Mammary epithelial cell (primary cell): ENCODE measurements at regions of chr6 and their contacts with region 1.

Region 1: GRCh38 chr6:42171813-42172581 is 1.2 kb upstream of the GUCA1A start:
- DNase-seq: no peak
- H3K4me3 ChIP-seq: no peak overlapping the region
- H3K27ac ChIP-seq: no peak overlapping the region
- H3K4me1 ChIP-seq: no peaks in the 10 kb centered on the region
- H3K27me3 ChIP-seq: no peaks in the 10 kb centered on the region
- CTCF ChIP-seq: no peak

Region 2: DNA sequence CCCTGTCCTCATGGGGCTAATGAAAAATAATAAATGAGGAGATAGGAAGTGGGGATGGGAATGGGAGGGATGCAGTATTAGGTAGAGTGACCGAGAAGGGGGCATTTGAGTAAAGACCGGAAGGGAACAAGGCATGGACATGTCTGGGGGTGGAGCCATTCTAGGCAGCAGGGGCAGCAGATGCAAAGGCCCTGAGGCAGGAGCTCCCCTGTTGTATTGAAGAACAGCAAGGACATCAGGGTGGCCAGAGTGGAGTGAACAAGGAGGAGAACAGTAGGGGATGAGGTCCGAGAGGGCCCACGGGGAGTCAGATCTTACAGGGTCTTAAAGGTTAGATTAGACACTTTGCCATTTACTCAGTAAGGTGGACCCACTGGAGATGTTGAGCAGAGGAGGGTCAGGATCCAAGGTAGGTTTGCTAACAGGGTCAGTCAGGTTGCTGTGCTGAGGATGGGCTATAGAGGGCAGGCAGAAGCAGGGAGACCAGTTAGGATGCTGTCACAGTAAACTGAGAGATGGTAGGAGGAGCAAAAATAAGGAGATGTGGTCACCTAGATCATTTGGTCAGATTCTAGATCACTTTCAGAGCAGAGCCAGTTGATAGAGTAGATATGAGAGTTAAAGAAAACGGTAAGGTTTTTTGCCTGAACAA is 103.0 kb before region 1 on chr6:
- CTCF ChIA-PET with region 1: no interaction called
- dilution Hi-C with region 1: loop called (anchors 5 kb)
- in situ Hi-C with region 1: no loop called
- intact Hi-C with region 1: no loop called
- DNase-seq: no peak
- H3K4me3 ChIP-seq: no peak overlapping the region
- H3K27ac ChIP-seq: no peak overlapping the region
- H3K4me1 ChIP-seq: no peaks in the 10 kb centered on the region
- H3K27me3 ChIP-seq: no peaks in the 10 kb centered on the region
- CTCF ChIP-seq: no peak

Region 3: GRCh38 chr6:42129069-42129676 is 42.8 kb before region 1 on chr6:
- CTCF ChIA-PET with region 1: no interaction called
- dilution Hi-C with region 1: loop called (anchors 5 kb)
- in situ Hi-C with region 1: no loop called
- intact Hi-C with region 1: no loop called
- DNase-seq: no peak
- H3K4me3 ChIP-seq: no peak overlapping the region
- H3K27ac ChIP-seq: no peak overlapping the region
- H3K4me1 ChIP-seq: peaks cover 7% of the 10 kb centered on the region
- H3K27me3 ChIP-seq: no peaks in the 10 kb centered on the region
- CTCF ChIP-seq: no peak

Region 4: GRCh38 chr6:42239351-42240055 is 67.5 kb after region 1 on chr6:
- CTCF ChIA-PET with region 1: no interaction called
- dilution Hi-C with region 1: loop called (anchors 5 kb)
- in situ Hi-C with region 1: no loop called
- intact Hi-C with region 1: no loop called
- DNase-seq: peak; percentile 81
- H3K4me3 ChIP-seq: no peak overlapping the region
- H3K27ac ChIP-seq: peak overlapping the region; percentile 47
- H3K4me1 ChIP-seq: peaks cover 26% of the 10 kb centered on the region
- H3K27me3 ChIP-seq: no peaks in the 10 kb centered on the region
- CTCF ChIP-seq: no peak

Region 5: DNA sequence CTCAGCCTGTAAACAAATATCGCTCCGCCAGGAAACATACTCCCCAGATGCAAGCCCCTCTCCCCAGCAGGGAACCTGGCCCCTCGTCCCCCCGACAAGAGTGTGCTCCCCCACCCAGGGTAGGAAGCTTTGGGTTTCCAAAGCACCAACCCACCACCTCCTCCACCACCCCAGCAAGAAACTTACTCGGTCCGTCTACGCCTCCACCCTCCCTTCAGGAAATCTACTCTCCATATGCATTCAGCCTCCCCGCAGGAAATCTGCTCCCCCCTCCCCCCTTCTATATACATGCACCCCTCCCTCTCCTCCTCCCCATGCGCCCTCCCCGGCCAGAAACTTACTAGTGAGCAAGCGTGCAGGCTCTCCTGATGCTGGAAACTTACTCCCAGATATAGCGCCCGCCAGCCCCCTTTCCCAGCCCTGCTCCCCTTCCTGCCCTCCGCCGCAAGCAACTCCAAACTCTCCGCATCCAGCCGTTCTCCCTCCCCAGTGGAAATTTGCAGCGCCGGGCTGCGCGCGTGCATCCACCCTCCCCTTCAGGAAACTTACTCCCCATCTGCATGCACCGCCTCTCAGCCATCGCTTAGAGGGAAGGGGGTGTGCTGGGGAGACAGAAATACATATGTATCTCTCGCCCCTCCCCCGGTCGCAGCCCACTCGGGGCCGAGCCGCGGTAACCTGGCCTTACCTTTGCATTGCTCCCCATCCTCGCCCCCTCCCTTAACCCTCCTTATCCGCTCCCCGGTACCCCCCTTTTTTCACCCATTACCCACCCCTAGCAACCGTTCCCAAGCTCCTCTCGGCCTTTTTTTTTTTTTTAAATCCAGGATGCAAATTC is 279.6 kb after region 1 on chr6 and contains the start of gene TRERF1:
- CTCF ChIA-PET with region 1: no interaction called
- dilution Hi-C with region 1: no loop called
- in situ Hi-C with region 1: no loop called
- intact Hi-C with region 1: no loop called
- DNase-seq: peak; percentile 63
- H3K4me3 ChIP-seq: peak within 1 kb of the TSS; percentile 71 to 91 (median 83)
- H3K27ac ChIP-seq: peak within 1 kb of the TSS; percentile 20
- H3K4me1 ChIP-seq: peaks cover 22% of the 10 kb centered on the region
- H3K27me3 ChIP-seq: no peaks in the 10 kb centered on the region
- CTCF ChIP-seq: no peak
- total RNA-seq, gene TRERF1: 0.33 to 4.9 TPM